ENCODE measurements at regions of chr1 and their contacts with region 1.

Region 1: DNA sequence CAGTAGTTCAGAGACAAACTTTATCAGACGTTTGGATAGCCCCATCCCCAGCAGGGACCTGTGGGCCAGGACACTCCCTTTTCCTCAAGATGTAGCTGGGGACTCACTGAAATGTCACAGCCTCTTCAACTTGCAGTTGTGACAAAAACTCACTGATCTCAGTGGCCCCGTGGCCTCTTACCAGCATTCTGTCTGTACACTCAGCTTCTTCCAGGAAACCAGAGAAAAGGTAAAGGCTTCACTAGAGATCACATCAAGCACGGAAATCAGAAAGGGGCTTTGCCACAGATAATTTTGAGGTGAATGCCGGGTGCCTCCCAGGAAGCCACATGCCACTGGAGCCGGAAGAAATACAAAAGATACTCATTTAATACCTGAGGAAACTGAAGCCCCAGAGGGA is 122.2 kb downstream of the CCDC185 start:
- H3K4me3 ChIP-seq: no peak overlapping the region
- H3K27ac ChIP-seq: no peak overlapping the region
- H3K4me1 ChIP-seq: peaks cover 13% of the 10 kb centered on the region; the same call in 1 of the 2 replicates
- CTCF ChIP-seq: no peak

Region 2: GRCh38 chr1:223531742-223532341 is 16.4 kb after region 1 on chr1:
- CTCF ChIA-PET with region 1: interaction called, 14 read pairs
- POLR2A ChIA-PET with region 1: no interaction called
- H3K4me3 ChIP-seq: no peak overlapping the region
- H3K27ac ChIP-seq: no peak overlapping the region
- H3K4me1 ChIP-seq: no peaks in the 10 kb centered on the region
- CTCF ChIP-seq: peak; percentile 76; the same call in 1 of the 2 replicates